Common myeloid progenitor, CD34-positive (primary cell): ENCODE measurements at regions of chr6 and their contacts with region 1.

Region 1: DNA sequence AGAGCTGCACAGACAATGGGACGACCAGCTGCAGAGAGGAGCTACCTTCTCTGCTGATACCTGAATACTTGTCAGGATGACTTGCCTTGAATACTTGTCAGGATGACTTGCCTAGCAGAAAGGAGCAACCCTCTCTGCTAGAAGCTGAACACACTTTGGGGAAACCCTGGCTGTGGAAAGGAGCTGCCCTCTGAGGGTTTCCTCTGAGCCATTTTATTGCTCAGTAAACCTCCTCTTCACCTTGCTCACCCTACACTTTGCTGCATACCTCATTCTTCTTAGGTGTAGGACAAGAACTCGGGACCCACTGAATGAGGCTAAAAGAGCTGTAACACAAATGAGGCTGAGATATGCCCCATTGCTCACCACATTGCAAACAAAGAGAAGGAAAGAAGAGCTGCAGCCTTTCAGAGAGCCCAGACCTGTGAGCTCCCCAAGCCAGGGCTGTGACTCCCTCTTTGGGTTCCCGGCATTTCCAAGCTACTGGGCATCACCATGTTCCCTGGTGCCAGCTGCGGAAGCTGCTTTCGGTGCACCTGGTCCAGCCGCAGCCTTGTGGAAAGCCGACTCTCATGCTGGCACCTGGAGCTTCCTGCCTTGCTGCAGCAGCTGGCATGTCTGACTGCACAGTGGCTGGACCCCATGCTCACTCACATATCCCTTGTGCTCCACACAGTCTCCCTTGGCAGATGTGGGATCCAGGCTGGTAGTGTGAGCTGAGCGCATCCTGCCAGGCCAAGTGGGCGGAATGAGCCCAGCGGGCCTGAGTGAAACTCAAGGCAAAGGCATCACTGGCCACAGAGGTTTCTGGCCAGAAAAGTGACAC is 106.7 kb upstream of the AHI1 start:
- DNase-seq: no peak
- H3K4me3 ChIP-seq: no peak overlapping the region
- H3K27ac ChIP-seq: no peak overlapping the region
- H3K4me1 ChIP-seq: no peaks in the 10 kb centered on the region
- H3K27me3 ChIP-seq: no peaks in the 10 kb centered on the region

Region 2: GRCh38 chr6:135514706-135515105 is 89.5 kb before region 1 on chr6:
- CTCF ChIA-PET with region 1: no interaction called
- POLR2A ChIA-PET with region 1: no interaction called
- DNase-seq: no peak
- H3K4me3 ChIP-seq: no peak overlapping the region
- H3K27ac ChIP-seq: no peak overlapping the region
- H3K4me1 ChIP-seq: no peaks in the 10 kb centered on the region
- H3K27me3 ChIP-seq: no peaks in the 10 kb centered on the region

Region 3: GRCh38 chr6:135537741-135538301 is 66.4 kb before region 1 on chr6:
- CTCF ChIA-PET with region 1: no interaction called
- POLR2A ChIA-PET with region 1: no interaction called
- DNase-seq: no peak
- H3K4me3 ChIP-seq: no peak overlapping the region
- H3K27ac ChIP-seq: no peak overlapping the region
- H3K4me1 ChIP-seq: peaks cover 0 to 6% (median 4%) of the 10 kb centered on the region in 4 experiments
- H3K27me3 ChIP-seq: no peaks in the 10 kb centered on the region

Region 4: GRCh38 chr6:135592276-135592675 is 12.0 kb before region 1 on chr6:
- CTCF ChIA-PET with region 1: interaction called, 10 read pairs
- POLR2A ChIA-PET with region 1: no interaction called
- DNase-seq: no peak
- H3K4me3 ChIP-seq: no peak overlapping the region
- H3K27ac ChIP-seq: no peak overlapping the region
- H3K4me1 ChIP-seq: peaks cover 0 to 1% (median 0%) of the 10 kb centered on the region in 4 experiments
- H3K27me3 ChIP-seq: no peaks in the 10 kb centered on the region

Region 5: GRCh38 chr6:136095986-136096385 is 491.7 kb after region 1 on chr6:
- CTCF ChIA-PET with region 1: no interaction called
- POLR2A ChIA-PET with region 1: no interaction called
- DNase-seq: no peak
- H3K4me3 ChIP-seq: no peak overlapping the region
- H3K27ac ChIP-seq: no peak overlapping the region
- H3K4me1 ChIP-seq: no peaks in the 10 kb centered on the region
- H3K27me3 ChIP-seq: no peaks in the 10 kb centered on the region